ENCODE measurements at regions of chr11 and their contacts with region 1.

Region 1: DNA sequence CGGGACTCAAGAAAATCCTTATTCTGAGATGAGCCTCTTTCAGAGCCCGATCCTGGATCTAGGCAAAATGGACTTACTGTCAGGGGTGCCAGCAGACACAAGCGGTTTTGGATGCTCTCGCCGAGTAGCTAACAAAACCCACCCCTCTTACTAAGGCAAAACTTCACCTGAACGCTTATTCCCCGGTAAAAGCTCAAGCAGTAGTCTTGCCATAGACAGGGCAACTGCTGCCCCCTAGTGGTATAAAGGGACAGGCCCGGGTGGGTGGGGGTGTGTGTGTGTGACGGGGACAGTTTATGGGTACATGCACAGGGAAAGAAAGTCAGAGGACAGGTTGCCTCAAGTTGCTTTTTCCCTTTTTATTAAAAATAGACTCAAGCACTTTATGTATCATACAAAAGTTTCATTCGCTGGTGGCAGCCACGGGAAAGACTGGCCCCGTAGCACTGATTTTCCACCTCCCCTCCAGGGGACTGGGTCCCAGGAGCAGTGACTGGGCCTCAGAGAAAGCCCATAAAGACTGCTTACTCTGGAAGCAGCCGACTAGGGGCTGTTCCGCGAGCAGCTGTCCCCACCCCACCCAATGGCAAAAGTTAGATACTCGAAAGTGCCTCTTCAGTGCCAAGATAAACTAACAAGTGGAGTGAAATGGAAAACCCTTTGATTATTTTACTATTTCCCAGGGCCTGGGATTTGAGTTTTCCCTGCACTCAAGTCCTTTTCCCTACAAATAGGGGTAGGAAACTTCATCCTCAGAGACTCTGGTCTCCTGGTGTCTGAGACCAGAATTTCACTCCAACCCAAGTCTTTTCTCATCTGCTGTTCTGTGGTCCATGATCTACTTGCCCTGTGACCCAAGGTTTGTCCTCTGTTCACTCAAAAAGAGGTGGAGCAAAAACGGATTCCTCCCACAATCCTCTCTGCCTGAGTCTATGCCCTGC is 4.7 kb downstream of the YPEL4 start:
- DNase-seq: no peak
- H3K4me3 ChIP-seq: no peak overlapping the region
- H3K27ac ChIP-seq: peak overlapping the region; percentile 11
- H3K27me3 ChIP-seq: peaks cover 21% of the 10 kb centered on the region
- CTCF ChIP-seq: peak; percentile 86

Region 2: DNA sequence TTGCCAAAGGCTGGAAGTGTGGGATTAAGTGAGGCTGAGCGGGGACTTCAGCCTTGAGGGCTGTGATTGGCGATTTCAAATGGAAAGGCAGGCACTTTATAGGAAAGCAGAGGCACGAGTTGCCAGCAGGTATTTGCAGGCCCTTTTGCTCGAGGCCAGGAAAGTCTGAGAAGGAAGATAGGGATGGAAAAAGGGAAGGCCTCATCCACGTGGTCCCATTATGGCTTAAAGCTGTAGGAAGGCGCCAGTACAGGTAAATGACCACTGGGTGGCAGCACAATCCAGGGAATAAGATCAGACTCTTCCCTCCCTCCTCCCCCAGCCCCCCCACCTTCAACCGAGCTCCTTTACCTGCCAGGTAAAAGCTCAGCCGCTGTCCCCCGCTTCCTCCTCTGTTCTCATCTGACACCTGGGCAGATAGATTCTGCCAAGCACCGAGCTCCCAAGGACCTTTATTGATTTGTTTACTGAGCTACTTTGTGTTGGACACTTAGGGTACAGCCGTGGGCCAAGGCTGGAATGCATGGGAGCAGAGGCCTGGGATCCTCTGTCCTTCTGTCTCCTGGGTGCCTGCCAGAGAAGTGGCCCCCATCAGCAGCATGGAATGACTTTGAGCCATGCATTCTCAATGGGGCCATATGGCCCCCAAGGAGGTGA is 299.3 kb before region 1 on chr11:
- CTCF ChIA-PET with region 1: interaction called, 21 read pairs
- POLR2A ChIA-PET with region 1: interaction called, 3 read pairs
- DNase-seq: no peak
- H3K4me3 ChIP-seq: no peak overlapping the region
- H3K27ac ChIP-seq: no peak overlapping the region
- H3K27me3 ChIP-seq: peaks cover 7% of the 10 kb centered on the region
- CTCF ChIP-seq: peak; percentile 65

Region 3: DNA sequence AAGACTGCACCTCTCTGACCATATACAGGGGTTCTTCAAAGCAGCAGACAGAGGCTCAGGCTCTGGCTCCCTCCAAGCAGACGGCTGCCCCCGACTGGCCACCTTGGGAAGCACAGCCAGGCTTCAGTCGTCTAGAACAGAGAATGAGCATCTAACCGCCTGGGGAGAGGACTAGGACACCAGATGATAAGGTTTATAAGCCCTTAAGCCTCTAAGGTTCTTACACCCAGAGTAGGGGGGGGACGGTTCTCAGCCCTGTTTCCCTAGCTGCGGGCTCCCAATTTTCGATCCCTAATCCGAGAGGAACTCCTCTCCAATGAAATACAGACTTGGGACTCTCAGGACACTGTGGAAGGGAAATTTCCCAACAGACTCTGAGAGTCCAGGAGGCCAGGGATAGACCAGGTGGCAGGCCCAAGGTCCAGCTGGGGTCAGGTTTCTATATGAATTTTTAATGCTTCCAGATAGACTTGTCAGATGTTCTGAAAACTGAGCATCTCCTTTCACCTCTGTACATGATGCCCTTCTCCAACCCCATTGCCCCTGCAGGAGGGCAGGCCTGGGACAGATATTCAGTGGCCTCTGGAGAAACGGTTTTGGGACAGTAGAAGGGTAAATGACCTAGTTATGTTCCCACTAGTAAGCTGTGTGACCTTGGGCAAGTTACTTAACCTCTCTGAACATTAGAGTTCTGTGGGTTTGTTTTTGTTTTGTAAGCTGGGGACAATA is 164.4 kb before region 1 on chr11:
- CTCF ChIA-PET with region 1: interaction called, 13 read pairs
- POLR2A ChIA-PET with region 1: no interaction called
- DNase-seq: no peak
- H3K4me3 ChIP-seq: no peak overlapping the region
- H3K27ac ChIP-seq: no peak overlapping the region
- H3K27me3 ChIP-seq: peaks cover 38% of the 10 kb centered on the region
- CTCF ChIP-seq: peak; percentile 75

Region 4: GRCh38 chr11:57530596-57531507 is 114.2 kb before region 1 on chr11 and contains the start of gene TIMM10:
- CTCF ChIA-PET with region 1: interaction called, 82 read pairs
- POLR2A ChIA-PET with region 1: interaction called, 3 read pairs
- DNase-seq: peak; percentile 86
- H3K4me3 ChIP-seq: peak within 1 kb of the TSS; percentile 99
- H3K27ac ChIP-seq: no peak within 1 kb of the TSS
- H3K27me3 ChIP-seq: peaks cover 5% of the 10 kb centered on the region
- CTCF ChIP-seq: no peak
- polyA plus RNA-seq, gene TIMM10: 76.6 and 82.8 TPM in 2 replicates

Region 5: GRCh38 chr11:57552479-57552878 is 92.5 kb before region 1 on chr11:
- CTCF ChIA-PET with region 1: interaction called, 23 read pairs
- POLR2A ChIA-PET with region 1: no interaction called
- DNase-seq: no peak
- H3K4me3 ChIP-seq: no peak overlapping the region
- H3K27ac ChIP-seq: no peak overlapping the region
- H3K27me3 ChIP-seq: no peaks in the 10 kb centered on the region
- CTCF ChIP-seq: no peak

Region 6: GRCh38 chr11:57567515-57568329 is 77.3 kb before region 1 on chr11 and contains the start of gene UBE2L6:
- CTCF ChIA-PET with region 1: interaction called, 227 read pairs
- POLR2A ChIA-PET with region 1: interaction called, 11 read pairs
- DNase-seq: no peak
- H3K4me3 ChIP-seq: peak within 1 kb of the TSS; percentile 96
- H3K27ac ChIP-seq: peak within 1 kb of the TSS; percentile 75
- H3K27me3 ChIP-seq: no peaks in the 10 kb centered on the region
- CTCF ChIP-seq: no peak
- polyA plus RNA-seq, gene UBE2L6: 63.8 and 76.8 TPM in 2 replicates

Region 7: DNA sequence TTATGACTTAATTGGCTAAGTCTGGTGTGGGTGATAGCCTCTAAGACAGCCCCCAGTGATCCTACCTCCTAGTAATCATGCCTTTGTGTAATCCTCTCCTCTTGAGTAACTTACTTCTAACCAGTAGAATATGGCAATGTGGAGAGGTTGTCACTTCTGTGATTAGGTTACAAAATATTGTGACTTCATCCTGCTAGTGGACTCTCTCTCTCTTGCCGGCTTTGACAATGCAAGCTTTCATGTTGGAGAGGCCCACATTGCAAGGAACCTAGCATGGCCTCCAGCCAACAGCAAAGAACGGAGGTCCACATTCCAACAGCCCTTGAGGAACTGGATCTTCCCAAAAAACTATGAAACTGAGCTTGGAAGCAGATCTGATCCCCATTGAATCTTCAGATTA is 14.8 kb before region 1 on chr11:
- CTCF ChIA-PET with region 1: interaction called, 14 read pairs
- POLR2A ChIA-PET with region 1: interaction called, 5 read pairs
- DNase-seq: no peak
- H3K4me3 ChIP-seq: no peak overlapping the region
- H3K27ac ChIP-seq: no peak overlapping the region
- H3K27me3 ChIP-seq: peaks cover 17% of the 10 kb centered on the region
- CTCF ChIP-seq: no peak